MCF 10A (cell line): ENCODE measurements at regions of chrX and their contacts with region 1.

Region 1: GRCh38 chrX:49172280-49172780 is 632 bp downstream of the PLP2 start:
- DNase-seq: peak; percentile 80
- H3K4me3 Mint-ChIP-seq: peak overlapping the region; percentile 88
- H3K27ac Mint-ChIP-seq: peak overlapping the region; percentile 54
- H3K4me1 Mint-ChIP-seq: peaks cover 20% of the 10 kb centered on the region
- H3K27me3 Mint-ChIP-seq: no peaks in the 10 kb centered on the region
- CTCF ChIP-seq: no peak

Region 2: GRCh38 chrX:49184294-49185061 is 12.1 kb after region 1 on chrX:
- CTCF ChIA-PET with region 1: interaction called, 3 read pairs
- POLR2A ChIA-PET with region 1: interaction called, 48 read pairs
- intact Hi-C with region 1: no loop called
- DNase-seq: peak; percentile 94
- H3K4me3 Mint-ChIP-seq: peak overlapping the region; percentile 75
- H3K27ac Mint-ChIP-seq: no peak overlapping the region
- H3K4me1 Mint-ChIP-seq: peaks cover 11% of the 10 kb centered on the region
- H3K27me3 Mint-ChIP-seq: no peaks in the 10 kb centered on the region
- CTCF ChIP-seq: no peak